Stomach (tissue), 19 donors: ENCODE measurements at regions of chr18 and their contacts with region 1.

Region 1: GRCh38 chr18:62399781-62400308 is 74.7 kb downstream of the TNFRSF11A start:
- DNase-seq: peak in 1 of 2 donors; percentile 45
- H3K4me3 ChIP-seq: no peak overlapping the region
- H3K27ac ChIP-seq: no peak overlapping the region
- H3K4me1 ChIP-seq: no peaks in the 10 kb centered on the region
- H3K27me3 ChIP-seq: no peaks in the 10 kb centered on the region
- CTCF ChIP-seq: peak in 1 of 7 experiments; percentile 12
- EP300 ChIP-seq: no peak
- POLR2A ChIP-seq: no peak

Region 2: DNA sequence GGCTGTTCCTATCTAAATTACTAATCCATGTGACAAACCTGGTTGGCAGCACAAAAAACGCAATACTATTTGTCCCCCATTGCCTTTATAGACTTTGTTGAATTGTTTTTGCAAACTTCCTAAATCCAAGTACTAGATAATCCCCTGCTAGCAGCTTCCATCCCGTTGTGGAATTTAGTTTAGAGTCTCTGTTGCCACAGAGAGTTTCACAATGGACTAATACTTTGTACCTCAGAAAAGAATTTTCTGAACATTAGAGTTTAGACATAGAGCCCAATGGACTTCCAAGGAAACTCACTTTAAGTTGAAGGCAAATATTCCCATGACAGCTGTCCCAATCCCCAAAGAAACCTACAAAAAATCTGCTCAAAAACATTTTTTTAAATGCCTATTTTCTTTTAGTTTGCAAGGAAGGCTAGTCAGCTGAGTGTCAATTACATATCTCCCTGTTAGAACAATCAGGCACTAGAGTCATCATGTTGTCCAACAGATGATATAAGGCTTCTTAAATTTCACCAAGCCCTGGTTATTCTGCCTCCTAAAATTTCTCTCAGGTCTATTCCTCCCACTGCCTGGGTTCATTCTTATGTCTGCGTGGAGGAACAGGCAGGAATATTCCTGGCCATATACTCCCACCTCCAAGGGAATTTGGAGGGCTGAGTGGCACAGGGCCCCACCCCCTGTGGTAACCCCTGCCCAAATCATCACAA is 534.2 kb before region 1 on chr18:
- intact Hi-C with region 1: no loop called
- DNase-seq: no peak
- H3K4me3 ChIP-seq: no peak overlapping the region
- H3K27ac ChIP-seq: peak overlapping the region in 4 of 5 donors; percentile 1 to 49 (median 25)
- H3K4me1 ChIP-seq: peaks cover 12 to 81% (median 33%) of the 10 kb centered on the region in 4 donors
- H3K27me3 ChIP-seq: no peaks in the 10 kb centered on the region
- CTCF ChIP-seq: no peak
- EP300 ChIP-seq: no peak
- POLR2A ChIP-seq: no peak

Region 3: GRCh38 chr18:62450546-62451406 is 50.9 kb after region 1 on chr18:
- intact Hi-C with region 1: loop called (anchors 5 kb)
- DNase-seq: peak; percentile 64 to 72
- H3K4me3 ChIP-seq: no peak overlapping the region
- H3K27ac ChIP-seq: peak overlapping the region; percentile 10 to 31 (median 20)
- H3K4me1 ChIP-seq: peaks cover 9 to 18% (median 11%) of the 10 kb centered on the region in 4 donors
- H3K27me3 ChIP-seq: peaks cover 0 to 7% (median 0%) of the 10 kb centered on the region in 3 donors
- CTCF ChIP-seq: no peak
- EP300 ChIP-seq: no peak
- POLR2A ChIP-seq: no peak